Left ventricle myocardium superior (tissue), 1 donor: ENCODE measurements at regions of chr2 and their contacts with region 1.

Region 1: GRCh38 chr2:112481050-112481527 is 867 bp upstream of the TTL start:
- DNase-seq: peak; percentile 89
- ATAC-seq: peak; percentile 92

Region 2: GRCh38 chr2:112579241-112579640 is 98.2 kb after region 1 on chr2:
- intact Hi-C with region 1: loop called (anchors 10 kb)
- DNase-seq: no peak
- ATAC-seq: no peak

Region 3: GRCh38 chr2:112597537-112598322 is 116.6 kb after region 1 on chr2:
- intact Hi-C with region 1: no loop called
- DNase-seq: no peak
- ATAC-seq: no peak